Activated B cell treated with CpG ODN at 0.5 μM for 24 hours (primary cell): ENCODE measurements at regions of chr2 and their contacts with region 1.

Region 1: DNA sequence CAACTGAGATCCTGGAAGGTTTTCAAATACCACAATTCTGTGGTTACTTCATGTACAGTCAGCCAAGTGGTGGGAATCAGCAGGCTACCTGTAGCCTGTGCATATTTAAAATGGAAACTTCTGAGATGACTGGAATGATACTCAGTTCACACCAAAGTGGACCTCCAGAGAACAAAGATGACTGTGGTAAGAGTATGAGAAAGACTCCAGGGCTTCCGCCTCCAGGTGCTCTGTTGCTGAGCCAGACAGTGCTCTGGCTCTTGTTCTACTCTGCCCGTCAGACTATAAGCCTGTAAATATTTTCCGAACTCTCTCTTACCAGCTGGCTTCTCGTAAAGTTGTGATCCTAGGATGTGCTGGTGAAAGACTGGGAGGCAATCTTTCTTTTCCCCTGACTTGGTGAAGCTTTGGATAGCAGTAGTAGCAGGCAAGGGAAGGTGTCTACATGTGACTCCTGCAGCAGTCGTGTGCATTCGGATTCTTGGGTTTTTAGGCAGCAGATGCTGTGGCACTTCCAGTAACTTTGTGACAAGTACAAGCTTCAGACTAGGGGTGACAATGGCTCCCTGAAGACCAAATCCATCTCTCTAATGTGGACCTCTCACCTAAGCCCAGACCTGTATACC is 23.1 kb downstream of the ST3GAL5 start:
- DNase-seq: no peak
- ATAC-seq: peak; percentile 33
- H3K4me3 Mint-ChIP-seq: no peak overlapping the region
- H3K27ac Mint-ChIP-seq: peak overlapping the region; percentile 54
- H3K4me1 Mint-ChIP-seq: peaks cover 61% of the 10 kb centered on the region
- H3K27me3 Mint-ChIP-seq: no peaks in the 10 kb centered on the region
- CTCF ChIP-seq: no peak

Region 2: DNA sequence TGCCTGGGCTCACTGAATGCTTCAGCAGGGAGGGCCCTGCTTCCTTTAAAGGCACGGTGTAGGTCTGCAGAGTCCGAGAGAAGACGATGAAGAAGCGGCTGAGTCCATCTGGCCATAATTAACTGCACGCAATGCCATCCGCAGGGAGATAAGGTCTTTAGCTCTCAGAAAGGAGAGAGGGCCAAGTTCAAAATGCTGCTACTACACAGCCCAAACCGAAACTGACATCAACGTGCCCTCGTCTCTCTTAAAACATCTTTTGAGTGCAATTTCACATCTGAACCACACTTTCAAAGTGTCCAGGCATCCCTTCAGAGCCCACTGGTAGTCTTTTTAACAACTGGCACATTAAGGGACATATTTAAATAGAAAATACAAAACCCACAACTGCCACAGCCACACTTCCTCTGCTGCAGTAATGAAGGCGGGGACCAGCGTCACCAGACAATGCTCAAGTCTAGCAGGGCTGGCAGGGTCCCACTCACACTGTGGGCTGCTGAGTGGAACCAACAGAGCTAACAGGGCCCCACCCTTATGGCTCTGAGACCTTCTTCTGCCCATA is 12.6 kb before region 1 on chr2:
- CTCF ChIA-PET with region 1: no interaction called
- POLR2A ChIA-PET with region 1: interaction called, 24 read pairs
- intact Hi-C with region 1: loop called (anchors 1 kb)
- DNase-seq: peak; percentile 29
- ATAC-seq: peak; percentile 76
- H3K4me3 Mint-ChIP-seq: peak overlapping the region; percentile 79
- H3K27ac Mint-ChIP-seq: peak overlapping the region; percentile 99
- H3K4me1 Mint-ChIP-seq: peaks cover 79% of the 10 kb centered on the region
- H3K27me3 Mint-ChIP-seq: no peaks in the 10 kb centered on the region
- CTCF ChIP-seq: no peak